Caco-2 (cell line): ENCODE measurements at regions of chr11 and their contacts with region 1.

Region 1: GRCh38 chr11:13962562-13963168 is at the start of gene SPON1:
- DNase-seq: peak; percentile 70 to 76
- H3K4me3 ChIP-seq: peak within 1 kb of the TSS; percentile 94
- H3K4me3 Mint-ChIP-seq: peak within 1 kb of the TSS; percentile 75
- H3K27ac Mint-ChIP-seq: peak within 1 kb of the TSS; percentile 76
- H3K4me1 ChIP-seq: peaks cover 35% of the 10 kb centered on the region
- H3K4me1 Mint-ChIP-seq: peaks cover 22% of the 10 kb centered on the region
- H3K27me3 ChIP-seq: no peaks in the 10 kb centered on the region
- H3K27me3 Mint-ChIP-seq: peaks cover 5% of the 10 kb centered on the region
- CTCF ChIP-seq: no peak
- total RNA-seq, gene SPON1: 41.4 and 46.9 TPM in 2 replicates

Region 2: DNA sequence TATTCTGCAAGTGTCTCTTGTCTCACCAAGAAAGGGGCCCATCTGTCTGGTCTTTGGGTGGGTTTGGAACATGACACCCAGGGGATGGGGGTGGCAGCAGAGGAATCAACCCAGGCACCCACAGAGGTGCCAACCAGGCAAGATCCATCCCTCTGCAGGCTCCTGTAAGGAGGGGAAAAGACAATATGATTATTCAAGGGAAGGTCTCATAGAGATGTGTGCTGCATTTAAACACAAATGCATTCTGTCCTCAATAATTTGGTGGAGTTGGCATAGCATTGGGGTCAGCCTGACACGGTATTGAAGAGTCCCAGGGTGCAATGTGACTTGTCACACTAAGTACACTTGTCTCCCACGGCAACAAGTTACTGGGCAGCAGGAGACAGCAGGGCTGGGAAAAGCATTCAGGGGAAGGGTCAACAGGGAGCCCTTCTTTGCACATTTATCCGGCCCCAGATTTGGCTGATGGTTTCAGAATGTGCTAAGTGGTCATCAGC is 33.2 kb before region 1 on chr11:
- CTCF ChIA-PET with region 1: no interaction called
- POLR2A ChIA-PET with region 1: no interaction called
- intact Hi-C with region 1: no loop called
- DNase-seq: no peak
- H3K4me3 ChIP-seq: no peak overlapping the region
- H3K4me3 Mint-ChIP-seq: no peak overlapping the region
- H3K27ac Mint-ChIP-seq: no peak overlapping the region
- H3K4me1 ChIP-seq: no peaks in the 10 kb centered on the region; the same call in 1 of the 2 replicates
- H3K4me1 Mint-ChIP-seq: peaks cover 6% of the 10 kb centered on the region
- H3K27me3 ChIP-seq: no peaks in the 10 kb centered on the region; the same call in 1 of the 2 replicates
- H3K27me3 Mint-ChIP-seq: no peaks in the 10 kb centered on the region
- CTCF ChIP-seq: no peak

Region 3: DNA sequence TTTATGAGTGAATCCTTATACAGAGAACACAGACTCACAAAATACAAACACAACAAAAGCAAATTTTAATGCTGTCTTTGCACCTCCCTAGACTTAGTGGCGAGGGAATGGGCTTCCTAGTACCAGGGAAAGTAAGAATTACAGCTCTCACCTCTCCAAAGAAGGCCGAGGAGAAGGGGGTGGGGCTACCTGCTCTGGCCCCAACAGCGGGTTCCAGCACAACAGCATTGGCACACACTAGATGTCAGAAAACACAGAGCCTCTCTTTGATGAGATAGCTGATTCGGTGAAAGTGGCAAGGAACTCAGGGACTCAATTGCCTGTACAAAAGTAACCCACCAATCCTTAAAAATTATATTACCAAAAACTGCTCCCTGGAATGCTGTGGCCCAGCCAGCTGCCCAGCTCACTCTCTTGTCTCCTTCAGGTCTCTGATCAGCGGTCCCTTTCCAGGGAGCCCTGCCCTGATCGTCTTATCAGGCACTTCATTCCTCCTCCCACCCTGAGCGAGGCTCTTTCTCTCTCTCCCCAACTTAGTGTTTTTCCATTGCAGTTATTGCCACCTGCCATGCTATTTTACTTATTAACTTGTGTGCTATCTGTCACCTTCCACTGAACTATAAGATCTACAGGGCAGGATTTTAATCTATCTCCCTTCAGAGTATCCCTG is 30.6 kb after region 1 on chr11:
- CTCF ChIA-PET with region 1: interaction called, 3 read pairs
- POLR2A ChIA-PET with region 1: interaction called, 3 read pairs
- intact Hi-C with region 1: loop called (anchors 2 kb)
- DNase-seq: peak; percentile 45 to 71
- H3K4me3 ChIP-seq: no peak overlapping the region
- H3K4me3 Mint-ChIP-seq: peak overlapping the region; percentile 62
- H3K27ac Mint-ChIP-seq: peak overlapping the region; percentile 79
- H3K4me1 ChIP-seq: peaks cover 46% of the 10 kb centered on the region
- H3K4me1 Mint-ChIP-seq: peaks cover 29% of the 10 kb centered on the region
- H3K27me3 ChIP-seq: no peaks in the 10 kb centered on the region
- H3K27me3 Mint-ChIP-seq: no peaks in the 10 kb centered on the region
- CTCF ChIP-seq: no peak

Region 4: DNA sequence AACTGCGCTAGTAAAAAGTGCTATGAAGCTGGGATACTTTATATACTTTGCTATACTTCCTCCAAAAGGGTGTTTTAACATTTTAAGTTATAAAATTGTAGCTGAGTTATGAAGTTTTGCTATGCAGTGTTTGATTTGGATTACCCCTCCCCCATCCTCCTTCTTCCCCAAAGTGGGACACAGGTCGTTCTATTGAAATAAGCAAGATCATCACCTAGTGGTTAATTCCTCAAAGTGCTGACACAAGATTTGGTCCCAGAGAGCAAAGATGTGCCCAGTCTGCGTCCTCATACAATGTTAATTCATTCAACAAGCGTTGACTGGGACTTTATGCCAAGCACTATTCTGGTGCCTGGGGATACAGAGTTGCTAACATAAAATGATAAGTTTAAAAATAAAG is 78.4 kb after region 1 on chr11:
- CTCF ChIA-PET with region 1: interaction called, 4 read pairs
- POLR2A ChIA-PET with region 1: no interaction called
- intact Hi-C with region 1: loop called (anchors 1 kb)
- DNase-seq: peak in 1 of 2 experiments; percentile 34
- H3K4me3 ChIP-seq: no peak overlapping the region
- H3K4me3 Mint-ChIP-seq: no peak overlapping the region
- H3K27ac Mint-ChIP-seq: no peak overlapping the region
- H3K4me1 ChIP-seq: peaks cover 15% of the 10 kb centered on the region
- H3K4me1 Mint-ChIP-seq: no peaks in the 10 kb centered on the region
- H3K27me3 ChIP-seq: no peaks in the 10 kb centered on the region
- H3K27me3 Mint-ChIP-seq: no peaks in the 10 kb centered on the region
- CTCF ChIP-seq: peak; percentile 43 to 67